Lower lobe of right lung (tissue), 2 donors: ENCODE measurements at regions of chr2 and their contacts with region 1.

Region 1: DNA sequence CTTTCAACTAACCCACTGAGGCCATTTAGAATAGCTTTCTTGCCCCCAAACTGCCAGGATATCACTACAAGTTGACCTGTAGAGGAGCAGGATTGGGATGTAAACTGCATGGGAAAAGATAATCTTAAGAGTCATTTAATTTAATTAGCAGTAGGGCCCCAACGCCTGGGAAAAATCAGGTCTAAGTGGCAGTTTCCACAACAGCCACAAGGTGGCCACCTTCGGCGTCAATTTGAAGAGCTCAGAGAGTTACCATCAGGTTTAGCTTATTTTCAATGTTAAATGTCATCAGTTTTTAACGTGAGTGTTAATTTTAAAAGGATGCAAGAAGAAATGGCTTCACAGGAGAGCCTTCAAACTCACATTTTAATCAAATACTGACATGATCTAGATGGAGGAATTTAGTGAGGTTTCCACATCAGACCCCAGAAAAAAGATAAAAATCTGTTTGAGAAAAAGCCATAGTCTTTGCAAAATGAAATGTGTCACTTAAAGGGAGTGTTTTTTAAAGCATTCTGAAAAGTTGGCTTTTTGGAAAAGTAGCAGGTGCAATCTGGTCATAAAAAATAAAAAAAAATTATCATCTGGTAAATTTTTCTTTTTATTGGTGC is 77.3 kb upstream of the UPP2 start:
- DNase-seq: peak; percentile 52
- ATAC-seq: peak; percentile 32 to 62
- H3K4me3 ChIP-seq: no peak overlapping the region
- H3K27ac ChIP-seq: no peak overlapping the region
- H3K4me1 ChIP-seq: no peaks in the 10 kb centered on the region
- H3K27me3 ChIP-seq: no peaks in the 10 kb centered on the region
- CTCF ChIP-seq: peak; percentile 86

Region 2: GRCh38 chr2:157538064-157538463 is 486.3 kb before region 1 on chr2:
- intact Hi-C with region 1: no loop called
- DNase-seq: no peak
- ATAC-seq: no peak
- H3K4me3 ChIP-seq: no peak overlapping the region
- H3K27ac ChIP-seq: no peak overlapping the region
- H3K4me1 ChIP-seq: no peaks in the 10 kb centered on the region
- H3K27me3 ChIP-seq: no peaks in the 10 kb centered on the region
- CTCF ChIP-seq: no peak

Region 3: DNA sequence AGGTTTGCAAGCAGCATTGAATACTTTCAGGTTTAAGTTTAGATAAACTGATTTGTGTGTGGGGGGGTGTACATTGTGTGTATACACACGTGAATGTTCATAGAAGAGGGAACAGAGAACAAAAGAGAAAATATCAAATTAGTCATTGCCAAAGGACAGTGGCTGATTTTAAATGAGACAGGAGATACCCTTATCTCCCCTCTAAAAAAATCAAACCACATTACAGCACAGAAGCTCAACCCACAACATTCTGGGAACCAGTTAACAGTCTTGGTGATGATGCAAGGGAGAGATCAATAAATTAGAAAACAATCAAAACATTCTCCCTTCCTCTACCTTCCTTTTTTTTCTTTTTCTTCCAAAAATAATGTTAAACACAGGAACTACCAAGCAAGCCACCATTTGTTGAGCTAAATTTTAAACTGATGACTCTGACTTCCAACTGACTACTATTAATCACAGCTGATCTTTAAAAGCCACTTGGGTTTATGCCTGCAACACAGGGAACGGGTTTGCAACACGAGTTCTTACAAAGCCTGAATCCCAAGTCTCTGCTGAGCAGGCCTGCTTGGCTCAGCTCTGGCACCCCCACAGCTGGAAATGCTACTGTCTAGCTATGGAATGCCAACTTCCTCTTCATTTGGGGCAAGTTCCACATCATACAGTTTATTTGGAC is 276.6 kb before region 1 on chr2:
- intact Hi-C with region 1: no loop called
- DNase-seq: no peak
- ATAC-seq: no peak
- H3K4me3 ChIP-seq: no peak overlapping the region
- H3K27ac ChIP-seq: no peak overlapping the region
- H3K4me1 ChIP-seq: no peaks in the 10 kb centered on the region
- H3K27me3 ChIP-seq: no peaks in the 10 kb centered on the region
- CTCF ChIP-seq: no peak

Region 4: GRCh38 chr2:158753641-158754611 is 729.5 kb after region 1 on chr2:
- intact Hi-C with region 1: loop called (anchors 10 kb)
- DNase-seq: no peak
- ATAC-seq: peak; percentile 79 to 88
- H3K4me3 ChIP-seq: no peak overlapping the region
- H3K27ac ChIP-seq: no peak overlapping the region
- H3K4me1 ChIP-seq: peaks cover 11% of the 10 kb centered on the region
- H3K27me3 ChIP-seq: no peaks in the 10 kb centered on the region
- CTCF ChIP-seq: peak; percentile 89